ENCODE measurements at regions of chr21 and their contacts with region 1.

Region 1: DNA sequence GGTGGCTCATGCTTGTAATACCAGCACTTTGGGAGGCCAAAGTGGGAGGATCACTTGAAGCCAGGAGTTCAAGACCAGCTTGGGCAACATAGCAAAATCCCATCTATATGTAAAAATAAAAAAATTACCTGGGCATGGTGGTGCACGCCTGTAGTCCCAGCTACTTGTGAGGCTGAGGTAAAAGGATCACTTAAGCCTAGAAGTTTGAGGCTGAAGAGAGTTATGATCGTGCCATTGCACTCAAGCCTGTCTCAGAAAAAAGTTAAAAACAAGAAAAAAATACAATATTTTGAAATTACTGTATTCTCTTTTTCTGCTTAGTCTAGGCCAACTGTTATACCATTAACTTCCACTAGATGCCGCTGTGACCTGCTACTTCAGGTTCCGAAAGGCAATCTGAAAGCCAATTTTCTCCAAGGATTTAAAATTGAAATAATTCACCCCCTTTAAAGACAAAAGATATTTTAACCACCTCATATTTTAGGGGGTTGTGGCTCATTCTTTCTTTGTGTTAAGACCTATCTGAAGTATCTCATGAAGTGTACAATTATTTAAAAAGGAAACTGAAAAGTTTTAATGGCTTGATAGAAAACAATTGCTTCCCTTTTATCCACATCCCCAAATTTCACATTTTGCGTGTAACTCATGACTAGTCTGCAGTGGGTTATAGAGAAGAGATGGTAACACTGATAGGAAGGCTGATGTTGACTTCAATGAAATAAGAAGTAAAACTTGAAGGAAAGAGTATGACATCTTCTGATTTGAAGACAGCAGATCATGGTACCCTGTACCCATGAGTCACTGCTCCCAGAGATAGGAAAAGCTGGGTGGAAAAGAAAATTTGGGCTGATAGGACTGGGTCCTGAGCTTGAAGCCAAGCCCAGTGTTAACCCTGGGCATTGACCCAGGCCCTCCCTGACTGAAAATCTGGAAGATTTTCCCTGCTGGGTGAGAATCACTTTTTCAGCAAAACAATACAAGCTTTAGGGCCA is 24.4 kb upstream of the CLDN14 start:
- DNase-seq: peak in 1 of 2 donors; percentile 27
- ATAC-seq: no peak

Region 2: GRCh38 chr21:36310016-36310415 is 194.3 kb before region 1 on chr21:
- intact Hi-C with region 1: no loop called
- DNase-seq: no peak
- ATAC-seq: no peak

Region 3: GRCh38 chr21:36927719-36928117 is 423.4 kb after region 1 on chr21:
- intact Hi-C with region 1: loop called (anchors 5 to 10 kb)
- DNase-seq: peak; percentile 71 to 92
- ATAC-seq: peak; percentile 92